SK-N-SH (cell line): ENCODE measurements at regions of chr19 and their contacts with region 1.

Region 1: GRCh38 chr19:34677386-34678084 is at the start of gene ZNF302:
- DNase-seq: peak; percentile 94
- H3K4me3 ChIP-seq: peak within 1 kb of the TSS; percentile 75 to 79
- H3K27ac ChIP-seq: peak within 1 kb of the TSS; percentile 80 to 99
- H3K4me1 ChIP-seq: peaks cover 0 to 7% of the 10 kb centered on the region in 2 experiments; a peak in 2 of 4 replicates
- H3K27me3 ChIP-seq: no peaks in the 10 kb centered on the region
- CTCF ChIP-seq: no peak
- EP300 ChIP-seq: peak in 1 of 2 experiments; percentile 5; a peak in 1 of 4 replicates
- RAD21 ChIP-seq: no peak
- polyA plus RNA-seq, gene ZNF302: 14.3 and 17.9 TPM in 2 replicates

Region 2: DNA sequence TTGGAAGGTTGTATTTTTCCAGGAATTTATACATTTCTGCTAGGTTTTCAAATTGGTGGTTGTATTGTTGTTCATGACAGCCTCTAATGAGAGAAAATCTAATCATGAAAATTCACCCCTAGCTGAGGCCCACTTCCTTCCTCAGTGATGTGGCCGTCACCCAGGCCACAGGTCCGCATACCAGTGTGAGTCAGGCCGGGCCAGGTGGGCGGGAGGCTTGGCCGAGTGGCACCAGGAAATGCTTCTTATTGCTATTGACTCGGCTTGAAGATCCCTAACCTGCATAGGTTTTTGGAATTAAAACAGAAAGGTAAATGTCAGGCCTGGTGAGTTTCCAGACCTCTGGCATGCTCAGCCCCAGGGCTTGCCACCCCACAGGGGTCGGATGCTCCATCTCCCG is 89.3 kb before region 1 on chr19:
- CTCF ChIA-PET with region 1: no interaction called
- POLR2A ChIA-PET with region 1: no interaction called
- DNase-seq: no peak
- H3K4me3 ChIP-seq: no peak overlapping the region
- H3K27ac ChIP-seq: no peak overlapping the region
- H3K4me1 ChIP-seq: no peaks in the 10 kb centered on the region
- H3K27me3 ChIP-seq: no peaks in the 10 kb centered on the region
- CTCF ChIP-seq: no peak
- EP300 ChIP-seq: no peak
- RAD21 ChIP-seq: no peak

Region 3: GRCh38 chr19:34645551-34645950 is 32.0 kb before region 1 on chr19:
- CTCF ChIA-PET with region 1: interaction called, 11 read pairs
- POLR2A ChIA-PET with region 1: interaction called, 22 read pairs
- DNase-seq: peak; percentile 77
- H3K4me3 ChIP-seq: no peak overlapping the region; a peak in 1 of 4 replicates
- H3K27ac ChIP-seq: peak overlapping the region in 1 of 2 experiments; percentile 95; a peak in 2 of 4 replicates
- H3K4me1 ChIP-seq: peaks cover 0 to 34% of the 10 kb centered on the region in 2 experiments; a peak in 2 of 4 replicates
- H3K27me3 ChIP-seq: no peaks in the 10 kb centered on the region
- CTCF ChIP-seq: no peak
- EP300 ChIP-seq: peak in 1 of 2 experiments; percentile 87; a peak in 2 of 4 replicates
- RAD21 ChIP-seq: peak; percentile 14; the same call in 1 of the 2 replicates